ENCODE measurements at regions of chr12 and their contacts with region 1.

Region 1: GRCh38 chr12:132566516-132567131 is 43.8 kb downstream of the LRCOL1 start:
- DNase-seq: peak in 9 of 10 donors; percentile 45 to 81 (median 64)
- H3K4me3 ChIP-seq: no peak overlapping the region
- H3K27ac ChIP-seq: peak overlapping the region in 32 of 59 donors; percentile 0 to 82 (median 46)
- H3K27me3 ChIP-seq: no peaks in the 10 kb centered on the region
- CTCF ChIP-seq: peak in 2 of 56 donors; percentile 10 to 12

Region 2: DNA sequence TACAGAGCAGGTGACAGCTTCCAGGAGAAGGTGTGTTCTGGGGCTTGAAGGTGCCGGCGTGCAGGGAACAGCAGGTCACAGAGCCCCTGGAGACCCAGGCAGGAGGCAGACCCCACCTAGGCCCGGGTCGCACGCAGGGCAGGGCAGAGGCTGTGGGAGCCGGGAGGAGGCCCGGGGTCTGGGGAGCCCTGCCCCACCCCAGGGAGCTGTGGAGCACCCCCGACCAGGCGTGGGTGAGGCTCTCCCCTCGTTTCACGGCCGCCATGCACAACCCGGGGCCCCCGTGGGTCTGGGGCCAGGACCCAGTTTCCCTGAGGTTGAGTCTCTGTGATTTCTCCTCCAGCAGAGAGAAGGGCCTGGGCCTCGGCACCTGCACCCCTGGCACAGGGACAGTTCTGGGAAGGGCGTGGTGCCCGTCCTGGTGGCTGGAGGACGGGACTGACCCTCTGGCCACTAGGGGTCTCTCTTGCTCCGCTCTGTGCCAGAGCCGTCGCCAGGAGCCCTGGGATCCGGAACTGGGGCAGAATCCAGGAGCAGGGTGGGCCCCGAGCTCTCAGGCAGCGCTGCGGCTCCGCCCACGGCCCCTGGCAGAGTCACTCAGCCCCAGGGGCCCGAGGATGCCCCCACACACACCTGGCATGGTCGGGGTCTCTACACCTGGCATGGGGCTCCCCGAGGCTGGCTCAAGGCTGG is 151.8 kb before region 1 on chr12:
- intact Hi-C with region 1: loop called in 1 of 2 experiments (anchors 5 kb)
- DNase-seq: peak in 9 of 10 donors; percentile 55 to 87 (median 72)
- H3K4me3 ChIP-seq: peak overlapping the region in 5 of 59 donors; percentile 5 to 31 (median 20)
- H3K27ac ChIP-seq: no peak overlapping the region
- H3K27me3 ChIP-seq: peaks cover 0 to 55% (median 30%) of the 10 kb centered on the region in 45 donors
- CTCF ChIP-seq: peak; percentile 52 to 99 (median 93)

Region 3: GRCh38 chr12:132489602-132490239 is 76.9 kb before region 1 on chr12 and contains the start of gene FBRSL1:
- intact Hi-C with region 1: no loop called
- DNase-seq: peak; percentile 83 to 90 (median 88)
- H3K4me3 ChIP-seq: peak within 1 kb of the TSS; percentile 55 to 86 (median 76)
- H3K27ac ChIP-seq: peak within 1 kb of the TSS in 55 of 59 donors; percentile 20 to 89 (median 78)
- H3K27me3 ChIP-seq: no peaks in the 10 kb centered on the region
- CTCF ChIP-seq: no peak
- total RNA-seq, gene FBRSL1: 41.4 to 125 (median 65.3) TPM

Region 4: GRCh38 chr12:132593521-132594358 is 27.1 kb after region 1 on chr12:
- intact Hi-C with region 1: no loop called
- DNase-seq: peak; percentile 59 to 96 (median 90)
- H3K4me3 ChIP-seq: peak overlapping the region in 47 of 59 donors; percentile 3 to 60 (median 37)
- H3K27ac ChIP-seq: peak overlapping the region in 1 of 59 donors; percentile 11
- H3K27me3 ChIP-seq: peaks cover 0 to 28% (median 0%) of the 10 kb centered on the region in 45 donors
- CTCF ChIP-seq: peak in 1 of 56 donors; percentile 16

Region 5: GRCh38 chr12:132700212-132700822 is 133.7 kb after region 1 on chr12:
- intact Hi-C with region 1: no loop called
- DNase-seq: no peak
- H3K4me3 ChIP-seq: no peak overlapping the region
- H3K27ac ChIP-seq: no peak overlapping the region
- H3K27me3 ChIP-seq: no peaks in the 10 kb centered on the region
- CTCF ChIP-seq: no peak

Region 6: GRCh38 chr12:132955094-132956010 is 388.7 kb after region 1 on chr12:
- intact Hi-C with region 1: no loop called
- DNase-seq: peak in 5 of 10 donors; percentile 19 to 56 (median 35)
- H3K4me3 ChIP-seq: peak overlapping the region; percentile 60 to 99 (median 87)
- H3K27ac ChIP-seq: peak overlapping the region in 58 of 59 donors; percentile 38 to 98 (median 94)
- H3K27me3 ChIP-seq: no peaks in the 10 kb centered on the region
- CTCF ChIP-seq: no peak

Measured in dorsolateral prefrontal cortex (tissue), 120 donors.